ENCODE measurements at regions of chr6 and their contacts with region 1.

Region 1: DNA sequence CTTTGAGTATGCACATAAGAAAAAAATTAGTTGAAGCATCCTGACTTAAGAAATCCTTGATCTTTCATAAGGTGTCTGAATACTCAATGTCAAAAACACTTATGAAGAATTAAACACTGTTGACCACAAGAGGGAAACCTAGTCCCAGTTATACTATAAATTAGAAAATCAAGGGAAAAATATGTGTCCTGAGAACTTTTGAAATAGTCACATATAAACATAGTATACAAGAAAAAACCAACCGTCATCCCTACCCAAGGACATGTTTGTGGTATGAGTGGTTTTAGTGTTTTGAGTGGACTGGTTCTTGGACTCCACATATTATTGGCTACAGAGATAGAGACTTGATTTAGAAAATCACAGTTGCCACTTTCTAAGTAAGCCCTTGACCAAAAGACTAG is 7.6 kb upstream of the HLA-DRA start:
- DNase-seq: peak; percentile 75
- H3K4me3 ChIP-seq: no peak overlapping the region
- H3K27ac ChIP-seq: no peak overlapping the region
- H3K4me1 ChIP-seq: peaks cover 24% of the 10 kb centered on the region
- CTCF ChIP-seq: peak; percentile 93

Region 2: GRCh38 chr6:32568561-32568960 is 136.5 kb after region 1 on chr6:
- CTCF ChIA-PET with region 1: no interaction called
- POLR2A ChIA-PET with region 1: no interaction called
- intact Hi-C with region 1: no loop called
- DNase-seq: no peak
- H3K4me3 ChIP-seq: no peak overlapping the region
- H3K27ac ChIP-seq: no peak overlapping the region
- H3K4me1 ChIP-seq: no peaks in the 10 kb centered on the region
- CTCF ChIP-seq: no peak

Region 3: GRCh38 chr6:32692019-32692418 is 260.0 kb after region 1 on chr6:
- CTCF ChIA-PET with region 1: interaction called, 4 read pairs
- POLR2A ChIA-PET with region 1: no interaction called
- intact Hi-C with region 1: loop called (anchors 2 kb)
- DNase-seq: peak; percentile 83
- H3K4me3 ChIP-seq: no peak overlapping the region
- H3K27ac ChIP-seq: peak overlapping the region; percentile 23
- H3K4me1 ChIP-seq: peaks cover 28% of the 10 kb centered on the region
- CTCF ChIP-seq: peak; percentile 89

Region 4: GRCh38 chr6:32700391-32701040 is 268.5 kb after region 1 on chr6:
- CTCF ChIA-PET with region 1: interaction called, 3 read pairs
- POLR2A ChIA-PET with region 1: no interaction called
- intact Hi-C with region 1: loop called (anchors 1 kb)
- DNase-seq: peak; percentile 70
- H3K4me3 ChIP-seq: no peak overlapping the region
- H3K27ac ChIP-seq: no peak overlapping the region
- H3K4me1 ChIP-seq: peaks cover 6% of the 10 kb centered on the region
- CTCF ChIP-seq: peak; percentile 95

Region 5: GRCh38 chr6:32785781-32786533 is 353.9 kb after region 1 on chr6:
- CTCF ChIA-PET with region 1: no interaction called
- POLR2A ChIA-PET with region 1: interaction called, 3 read pairs
- intact Hi-C with region 1: loop called (anchors 2 kb)
- DNase-seq: peak; percentile 73
- H3K4me3 ChIP-seq: no peak overlapping the region
- H3K27ac ChIP-seq: no peak overlapping the region
- H3K4me1 ChIP-seq: no peaks in the 10 kb centered on the region
- CTCF ChIP-seq: peak; percentile 85

Measured in OCI-LY7 (cell line).